ENCODE measurements at regions of chr3 and their contacts with region 1.

Region 1: DNA sequence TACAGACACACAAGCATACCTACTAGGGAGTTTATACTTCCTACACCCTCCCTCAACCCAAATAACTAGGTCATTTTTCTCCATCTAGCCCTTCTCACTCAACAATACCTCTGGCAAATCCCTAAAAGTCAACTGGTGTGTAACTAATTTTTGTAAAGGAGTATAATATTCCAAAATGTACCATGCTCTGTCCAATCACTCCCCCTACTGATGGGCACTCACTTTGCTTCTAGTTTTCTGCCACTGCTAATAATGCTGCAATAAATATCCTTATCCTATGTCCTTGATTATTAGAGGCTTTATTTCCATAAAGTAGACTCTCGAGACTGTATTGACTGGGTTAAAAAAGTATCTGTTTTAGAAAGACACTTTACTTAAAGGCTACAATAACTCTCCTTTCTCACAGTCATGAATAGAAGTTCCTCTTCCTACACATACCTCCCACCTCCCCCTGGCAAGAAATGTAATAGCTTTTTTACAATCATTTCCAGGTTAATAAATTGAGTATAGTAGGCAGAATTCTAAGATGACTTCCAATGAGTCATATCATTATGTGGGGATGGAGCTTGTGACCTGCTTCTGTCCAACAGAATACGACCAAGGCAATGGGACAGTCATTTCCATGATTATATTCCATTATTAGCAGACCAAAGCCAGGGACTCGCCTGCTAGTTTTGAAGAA is 30.0 kb downstream of the SHQ1 start:
- DNase-seq: peak; percentile 56
- ATAC-seq: peak; percentile 12
- H3K4me3 ChIP-seq: no peak overlapping the region
- H3K27ac ChIP-seq: no peak overlapping the region
- H3K4me1 ChIP-seq: peaks cover 31% of the 10 kb centered on the region
- H3K27me3 ChIP-seq: no peaks in the 10 kb centered on the region
- CTCF ChIP-seq: peak; percentile 93

Region 2: DNA sequence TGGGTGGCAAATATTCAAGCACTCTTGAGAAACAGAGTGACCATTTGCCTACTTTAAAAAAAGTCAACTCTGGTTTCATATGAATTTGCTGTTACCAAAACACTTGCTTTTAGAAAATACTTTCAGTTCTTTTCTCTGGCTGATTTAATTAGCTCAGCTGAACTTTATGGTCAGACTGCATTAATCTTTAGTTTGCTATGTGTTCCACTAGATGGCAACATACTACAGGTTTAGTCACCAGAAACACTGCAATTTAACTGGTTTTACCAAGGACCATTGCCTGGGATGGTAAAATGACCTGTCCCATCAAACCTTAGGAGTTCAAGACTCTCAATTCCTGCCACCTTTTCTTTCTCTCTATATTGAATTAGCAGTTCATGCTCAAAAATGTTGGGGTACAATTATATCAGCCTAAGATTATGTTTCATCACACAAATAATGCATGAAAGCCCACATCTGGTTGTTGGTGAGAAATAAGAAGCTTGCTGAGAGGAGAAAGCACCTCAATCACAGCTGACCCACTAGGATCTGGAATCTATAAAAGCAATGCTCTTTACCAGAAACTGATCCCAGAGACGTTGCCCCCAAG is 1107.2 kb before region 1 on chr3:
- CTCF ChIA-PET with region 1: no interaction called
- POLR2A ChIA-PET with region 1: no interaction called
- intact Hi-C with region 1: loop called (anchors 5 kb)
- DNase-seq: peak; percentile 77
- ATAC-seq: peak; percentile 96
- H3K4me3 ChIP-seq: no peak overlapping the region
- H3K27ac ChIP-seq: no peak overlapping the region
- H3K4me1 ChIP-seq: no peaks in the 10 kb centered on the region
- H3K27me3 ChIP-seq: no peaks in the 10 kb centered on the region
- CTCF ChIP-seq: peak; percentile 86

Region 3: DNA sequence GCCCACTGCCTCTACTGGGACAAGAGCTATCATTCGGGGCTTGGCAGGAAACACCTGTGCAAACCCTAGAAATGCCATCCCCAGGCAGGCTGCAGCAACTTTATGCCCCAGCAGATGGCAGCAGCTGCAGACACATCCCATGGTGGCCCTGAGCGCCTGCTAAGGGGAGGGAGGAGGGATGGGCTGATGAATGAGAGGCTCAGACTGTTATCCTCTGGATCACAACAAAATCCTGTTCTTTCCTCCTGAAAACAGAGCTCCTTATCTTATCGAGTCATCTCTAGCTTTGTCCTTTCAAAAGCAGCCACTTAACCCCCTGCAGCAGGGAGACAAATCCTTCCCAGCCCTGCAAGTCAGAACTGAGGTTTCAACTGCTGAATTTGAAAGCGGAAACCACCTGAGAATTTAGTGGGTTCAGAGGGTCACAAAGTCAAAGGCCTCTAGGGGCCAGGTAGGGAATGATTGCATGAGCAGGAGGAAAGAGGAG is 942.7 kb before region 1 on chr3:
- CTCF ChIA-PET with region 1: interaction called, 4 read pairs
- POLR2A ChIA-PET with region 1: no interaction called
- intact Hi-C with region 1: loop called (anchors 1 kb)
- DNase-seq: peak; percentile 83
- ATAC-seq: peak; percentile 99
- H3K4me3 ChIP-seq: no peak overlapping the region
- H3K27ac ChIP-seq: no peak overlapping the region
- H3K4me1 ChIP-seq: no peaks in the 10 kb centered on the region
- H3K27me3 ChIP-seq: peaks cover 39% of the 10 kb centered on the region
- CTCF ChIP-seq: peak; percentile 92

Region 4: DNA sequence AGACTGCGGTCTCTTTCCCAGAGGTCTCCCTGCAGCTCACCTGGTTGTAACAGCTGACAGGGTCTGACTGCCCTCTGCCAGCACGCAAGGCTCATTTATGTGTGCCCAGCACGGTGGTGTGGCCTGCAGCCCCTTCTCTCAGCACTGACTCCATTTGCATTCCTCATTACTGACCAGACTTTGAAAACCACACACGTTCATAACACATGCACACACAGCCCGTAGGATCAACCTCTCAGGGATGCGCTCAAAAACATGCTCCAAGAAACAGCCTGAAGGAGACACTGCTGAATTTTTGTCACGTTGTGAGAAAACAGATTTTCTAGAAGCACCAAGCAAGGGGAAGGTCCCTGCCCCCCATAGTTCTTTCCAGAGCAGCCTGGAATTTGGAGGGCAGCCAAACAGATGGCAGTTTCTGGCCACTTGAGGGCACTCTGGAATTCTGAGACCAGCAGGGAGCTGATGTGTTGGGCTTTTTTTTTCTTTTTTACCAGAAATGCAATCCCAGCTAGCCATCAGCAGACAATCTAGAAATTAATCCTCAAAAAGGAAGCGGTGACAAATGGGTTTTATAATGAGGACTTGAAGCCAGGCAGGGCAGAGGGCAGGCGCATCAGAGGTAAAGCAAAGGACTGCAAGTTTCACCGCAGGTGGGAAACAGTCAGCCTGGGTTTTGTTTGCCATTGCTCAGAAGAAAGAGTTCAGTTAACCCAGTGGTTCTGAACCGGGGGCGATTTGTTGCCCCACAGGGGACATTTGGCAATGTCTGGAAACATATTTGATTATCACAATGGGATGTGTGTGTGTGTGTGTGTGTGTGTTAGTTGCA is 862.8 kb before region 1 on chr3:
- CTCF ChIA-PET with region 1: interaction called, 7 read pairs
- POLR2A ChIA-PET with region 1: no interaction called
- intact Hi-C with region 1: loop called (anchors 1 kb)
- DNase-seq: peak; percentile 85
- ATAC-seq: peak; percentile 62
- H3K4me3 ChIP-seq: no peak overlapping the region
- H3K27ac ChIP-seq: no peak overlapping the region
- H3K4me1 ChIP-seq: peaks cover 4% of the 10 kb centered on the region; the same call in 1 of the 2 replicates
- H3K27me3 ChIP-seq: peaks cover 44% of the 10 kb centered on the region
- CTCF ChIP-seq: peak; percentile 92

Region 5: GRCh38 chr3:72447059-72447946 is 370.9 kb before region 1 on chr3:
- CTCF ChIA-PET with region 1: no interaction called
- POLR2A ChIA-PET with region 1: no interaction called
- intact Hi-C with region 1: loop called (anchors 2 kb)
- DNase-seq: peak; percentile 92
- ATAC-seq: peak; percentile 86
- H3K4me3 ChIP-seq: peak overlapping the region; percentile 49; the same call in 1 of the 2 replicates
- H3K27ac ChIP-seq: no peak overlapping the region
- H3K4me1 ChIP-seq: peaks cover 22% of the 10 kb centered on the region
- H3K27me3 ChIP-seq: no peaks in the 10 kb centered on the region
- CTCF ChIP-seq: no peak

Region 6: DNA sequence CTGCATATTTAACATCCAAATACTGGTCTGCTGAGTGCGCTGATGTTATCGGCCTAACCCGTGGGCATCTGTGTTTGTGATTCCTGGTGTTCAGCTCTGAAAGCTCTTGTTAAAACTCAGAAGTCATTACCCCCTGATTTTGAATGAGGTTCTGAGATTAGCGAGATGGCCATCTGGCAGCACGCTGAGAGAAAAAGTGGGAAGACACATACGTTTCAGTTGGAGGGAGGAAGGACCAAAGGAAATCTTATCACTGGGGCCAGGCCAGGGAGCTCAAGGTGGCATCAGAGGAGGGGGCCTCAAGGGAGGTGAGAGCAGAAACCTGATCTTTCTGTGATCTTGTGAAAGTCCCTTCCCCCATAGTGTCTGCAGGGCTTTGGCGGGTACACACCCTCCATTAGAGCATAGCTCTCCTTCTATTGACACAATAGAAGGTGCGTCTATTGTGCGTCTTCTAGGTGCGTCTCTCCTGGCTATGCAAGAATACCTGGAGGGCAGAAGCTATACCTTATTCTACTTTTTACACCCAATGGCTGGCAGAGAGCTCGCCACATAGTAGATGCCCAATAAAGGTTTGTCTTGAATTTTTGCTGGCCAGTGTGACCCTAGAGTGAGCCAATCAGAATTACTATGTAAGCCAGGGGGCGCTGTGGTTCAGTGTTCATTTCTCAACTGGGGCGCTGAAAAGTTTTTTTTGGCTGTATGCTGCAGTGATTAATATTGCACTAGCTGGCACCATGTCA is 152.4 kb before region 1 on chr3:
- CTCF ChIA-PET with region 1: interaction called, 8 read pairs
- POLR2A ChIA-PET with region 1: no interaction called
- intact Hi-C with region 1: loop called (anchors 1 kb)
- DNase-seq: peak; percentile 73
- ATAC-seq: peak; percentile 60
- H3K4me3 ChIP-seq: no peak overlapping the region
- H3K27ac ChIP-seq: no peak overlapping the region
- H3K4me1 ChIP-seq: peaks cover 9% of the 10 kb centered on the region
- H3K27me3 ChIP-seq: no peaks in the 10 kb centered on the region
- CTCF ChIP-seq: peak; percentile 85

Region 7: DNA sequence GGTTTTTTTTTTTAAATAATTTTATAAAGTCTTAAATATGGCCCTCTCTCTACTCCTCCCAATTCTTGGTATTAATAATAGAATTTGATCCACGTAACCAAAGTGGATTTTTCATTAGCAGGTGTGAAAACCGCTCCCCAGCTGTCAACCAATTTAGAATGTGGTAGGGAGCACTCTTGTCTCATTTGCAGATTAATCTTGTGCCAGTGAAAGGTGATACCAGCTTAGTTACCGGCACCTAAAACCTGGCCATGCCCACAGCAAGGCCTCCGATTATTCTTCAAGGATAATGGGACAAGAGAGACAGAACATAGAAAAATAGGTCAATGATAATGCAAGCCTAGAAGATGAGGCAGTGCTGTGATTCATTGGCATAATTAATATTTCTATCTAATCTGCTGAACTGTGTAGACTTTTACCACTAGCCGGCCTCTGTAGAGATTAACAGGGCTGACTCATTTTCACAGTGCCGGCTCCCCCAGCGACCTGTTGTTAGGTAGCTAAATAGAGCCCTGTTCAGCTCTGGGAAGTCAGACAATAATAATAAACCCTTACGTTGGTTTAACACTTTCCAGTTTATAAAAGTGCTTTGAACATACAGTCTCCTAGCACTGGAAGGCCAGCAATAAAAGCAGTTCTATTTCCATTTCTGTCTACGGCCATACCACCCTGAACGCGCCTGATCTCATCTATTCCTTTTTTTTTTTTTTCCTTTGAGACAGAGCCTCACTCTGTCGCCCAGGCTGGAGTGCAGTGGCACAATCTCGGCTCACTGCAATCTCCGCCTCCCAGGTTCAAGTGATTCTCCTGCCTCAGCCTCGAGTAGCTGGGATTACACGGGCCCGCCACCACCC is 72.9 kb before region 1 on chr3:
- CTCF ChIA-PET with region 1: interaction called, 3 read pairs
- POLR2A ChIA-PET with region 1: no interaction called
- intact Hi-C with region 1: loop called (anchors 1 kb)
- DNase-seq: peak; percentile 72
- ATAC-seq: peak; percentile 82
- H3K4me3 ChIP-seq: no peak overlapping the region
- H3K27ac ChIP-seq: peak overlapping the region; percentile 77
- H3K4me1 ChIP-seq: peaks cover 26% of the 10 kb centered on the region
- H3K27me3 ChIP-seq: no peaks in the 10 kb centered on the region
- CTCF ChIP-seq: no peak

Region 8: GRCh38 chr3:73341272-73341892 is 523.1 kb after region 1 on chr3:
- CTCF ChIA-PET with region 1: no interaction called
- POLR2A ChIA-PET with region 1: no interaction called
- intact Hi-C with region 1: no loop called
- DNase-seq: no peak
- ATAC-seq: no peak
- H3K4me3 ChIP-seq: no peak overlapping the region
- H3K27ac ChIP-seq: no peak overlapping the region
- H3K4me1 ChIP-seq: no peaks in the 10 kb centered on the region
- H3K27me3 ChIP-seq: peaks cover 4% of the 10 kb centered on the region; the same call in 1 of the 2 replicates
- CTCF ChIP-seq: no peak